ENCODE measurements at regions of chr22 and their contacts with region 1.

Region 1: GRCh38 chr22:32050678-32051515 is 7.8 kb downstream of the SLC5A1 start:
- DNase-seq: peak; percentile 88
- ATAC-seq: peak; percentile 99
- H3K4me3 Mint-ChIP-seq: no peak overlapping the region
- H3K27ac Mint-ChIP-seq: no peak overlapping the region
- H3K4me1 Mint-ChIP-seq: peaks cover 18% of the 10 kb centered on the region
- H3K27me3 Mint-ChIP-seq: peaks cover 53% of the 10 kb centered on the region

Region 2: GRCh38 chr22:31952459-31952858 is 98.4 kb before region 1 on chr22:
- CTCF ChIA-PET with region 1: no interaction called
- POLR2A ChIA-PET with region 1: no interaction called
- intact Hi-C with region 1: loop called in 1 of 2 experiments (anchors 1 kb)
- DNase-seq: no peak
- ATAC-seq: no peak
- H3K4me3 Mint-ChIP-seq: no peak overlapping the region
- H3K27ac Mint-ChIP-seq: no peak overlapping the region
- H3K4me1 Mint-ChIP-seq: peaks cover 67% of the 10 kb centered on the region
- H3K27me3 Mint-ChIP-seq: no peaks in the 10 kb centered on the region

Region 3: DNA sequence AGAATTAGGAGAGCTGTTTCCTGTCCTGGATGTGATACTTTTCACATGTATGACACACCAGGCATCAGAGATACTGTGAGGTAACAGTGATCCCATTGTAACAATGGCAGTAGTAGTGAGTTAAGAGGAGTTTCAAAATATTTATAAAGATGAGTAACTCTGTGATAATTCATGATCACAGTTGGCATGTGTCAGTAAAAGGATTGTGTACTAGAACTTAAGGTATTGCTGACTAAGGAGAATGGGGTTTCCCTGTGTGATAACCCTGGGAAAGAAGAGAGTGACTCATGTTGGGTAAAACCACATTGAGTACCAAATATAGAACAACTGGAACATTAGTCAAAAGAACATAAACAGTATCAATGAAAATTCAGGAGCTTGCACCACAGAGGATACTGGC is 30.8 kb before region 1 on chr22:
- CTCF ChIA-PET with region 1: no interaction called
- POLR2A ChIA-PET with region 1: no interaction called
- intact Hi-C with region 1: loop called in 1 of 2 experiments (anchors 1 kb)
- DNase-seq: no peak
- ATAC-seq: peak; percentile 86
- H3K4me3 Mint-ChIP-seq: no peak overlapping the region
- H3K27ac Mint-ChIP-seq: no peak overlapping the region
- H3K4me1 Mint-ChIP-seq: peaks cover 8% of the 10 kb centered on the region
- H3K27me3 Mint-ChIP-seq: peaks cover 26% of the 10 kb centered on the region

Region 4: GRCh38 chr22:32482708-32483107 is 431.8 kb after region 1 on chr22:
- CTCF ChIA-PET with region 1: no interaction called
- POLR2A ChIA-PET with region 1: no interaction called
- intact Hi-C with region 1: loop called in 1 of 2 experiments (anchors 2 kb)
- DNase-seq: peak; percentile 61
- ATAC-seq: peak; percentile 90
- H3K4me3 Mint-ChIP-seq: no peak overlapping the region
- H3K27ac Mint-ChIP-seq: no peak overlapping the region
- H3K4me1 Mint-ChIP-seq: peaks cover 25% of the 10 kb centered on the region
- H3K27me3 Mint-ChIP-seq: no peaks in the 10 kb centered on the region

Measured in activated CD4-positive, alpha-beta T cell treated with anti-CD3 and anti-CD28 coated beads for 36 hours (primary cell).